ENCODE measurements at regions of chr21 and their contacts with region 1.

Region 1: GRCh38 chr21:42089093-42089631 is 18.0 kb downstream of the UMODL1 start:
- DNase-seq: no peak
- H3K4me3 ChIP-seq: no peak overlapping the region
- H3K27ac ChIP-seq: no peak overlapping the region
- H3K4me1 ChIP-seq: peaks cover 0 to 9% (median 5%) of the 10 kb centered on the region in 4 experiments; a peak in 5 of 7 replicates
- H3K27me3 ChIP-seq: peaks cover 0 to 6% (median 3%) of the 10 kb centered on the region in 4 experiments; a peak in 5 of 7 replicates
- CTCF ChIP-seq: no peak
- EP300 ChIP-seq: no peak
- POLR2A ChIP-seq: no peak
- RAD21 ChIP-seq: no peak

Region 2: GRCh38 chr21:41992576-41992975 is 96.6 kb before region 1 on chr21:
- CTCF ChIA-PET with region 1: no interaction called
- POLR2A ChIA-PET with region 1: no interaction called
- DNase-seq: no peak
- H3K4me3 ChIP-seq: no peak overlapping the region
- H3K27ac ChIP-seq: no peak overlapping the region
- H3K4me1 ChIP-seq: no peaks in the 10 kb centered on the region
- H3K27me3 ChIP-seq: no peaks in the 10 kb centered on the region
- CTCF ChIP-seq: no peak
- EP300 ChIP-seq: no peak
- POLR2A ChIP-seq: no peak
- RAD21 ChIP-seq: no peak

Region 3: DNA sequence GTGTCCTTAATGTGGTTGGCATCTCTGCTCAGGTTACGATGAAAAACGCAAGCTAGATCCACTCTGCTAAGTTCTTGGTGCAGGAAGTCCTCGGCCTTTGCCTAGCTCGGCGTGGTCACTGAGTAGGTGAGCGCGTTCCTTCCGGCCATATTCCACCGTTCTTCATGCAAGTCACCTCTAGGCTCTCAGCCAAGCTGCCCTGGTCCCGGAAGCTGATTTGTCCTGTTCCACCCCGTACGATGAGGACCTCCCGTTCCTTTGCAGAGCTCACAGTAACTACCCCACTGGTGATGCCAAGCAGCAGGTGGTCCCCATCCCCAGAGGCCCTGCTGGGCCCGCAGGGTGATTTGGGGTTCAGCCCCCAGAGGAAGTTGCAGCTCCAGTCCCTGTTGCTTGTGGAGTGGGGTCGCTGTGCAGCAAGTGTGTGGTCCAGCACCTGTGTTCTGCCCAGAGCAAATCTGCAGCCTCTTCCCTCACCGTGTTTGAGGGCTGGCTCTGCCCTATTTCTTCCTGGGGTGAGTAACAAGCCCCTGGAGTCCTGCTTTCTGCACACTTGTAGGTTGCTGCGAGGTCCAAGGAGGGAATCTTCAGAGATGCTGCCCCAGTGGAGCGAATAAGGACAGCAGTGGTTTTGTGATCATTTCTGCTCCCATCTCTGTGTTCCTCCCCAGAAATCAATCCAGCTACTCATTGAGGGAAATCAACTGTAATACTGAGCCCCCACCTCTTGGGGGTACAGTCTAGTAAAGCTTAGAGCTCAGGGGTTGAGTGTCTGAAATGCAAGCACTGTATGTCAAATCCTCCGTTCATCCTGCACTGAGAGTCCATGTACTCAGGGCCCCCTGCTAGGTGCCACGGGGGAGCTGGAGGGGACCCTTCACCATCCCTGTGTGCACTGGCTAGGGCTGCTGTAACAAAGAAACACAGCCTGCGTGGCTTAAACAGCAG is 15.7 kb before region 1 on chr21:
- CTCF ChIA-PET with region 1: interaction called, 20 read pairs
- POLR2A ChIA-PET with region 1: interaction called, 3 read pairs
- DNase-seq: no peak
- H3K4me3 ChIP-seq: no peak overlapping the region
- H3K27ac ChIP-seq: no peak overlapping the region
- H3K4me1 ChIP-seq: no peaks in the 10 kb centered on the region
- H3K27me3 ChIP-seq: no peaks in the 10 kb centered on the region
- CTCF ChIP-seq: no peak
- EP300 ChIP-seq: no peak
- POLR2A ChIP-seq: no peak
- RAD21 ChIP-seq: no peak; a peak in 1 of 4 replicates